CD8-positive, alpha-beta T cell (primary cell): ENCODE measurements at regions of chr4 and their contacts with region 1.

Region 1: DNA sequence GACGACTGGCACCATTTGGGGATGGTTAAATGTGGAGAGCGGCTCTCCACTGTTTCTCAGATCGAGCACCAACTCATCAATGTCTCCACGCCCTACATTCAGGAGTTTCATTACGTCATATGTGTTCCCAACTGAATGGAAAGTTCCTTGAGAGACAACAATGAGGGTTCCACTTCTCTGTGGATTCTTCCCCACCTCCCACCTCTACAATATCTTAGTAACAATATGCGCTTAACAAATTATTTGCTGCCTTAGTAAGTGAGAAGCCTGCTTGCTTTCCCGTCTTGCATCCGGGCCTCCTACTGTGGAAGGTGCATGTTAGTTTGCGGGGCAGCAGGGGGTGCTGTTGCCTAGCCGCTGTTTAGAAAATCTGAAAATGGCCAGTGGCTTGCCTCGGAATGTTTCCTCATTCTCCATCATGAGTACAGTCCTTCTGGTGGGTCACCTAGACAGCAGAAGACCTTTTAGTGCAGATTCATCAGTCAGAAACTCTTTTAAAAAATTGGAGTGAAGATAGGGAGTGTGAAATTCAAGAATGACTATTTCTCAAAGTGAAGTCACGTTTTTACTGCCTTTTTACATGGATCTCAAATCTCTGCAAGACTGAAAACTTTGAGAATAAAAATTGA is 55.7 kb downstream of the PHOX2B start:
- DNase-seq: peak in 4 of 9 experiments; percentile 13 to 32 (median 18)
- ATAC-seq: no peak
- H3K4me3 ChIP-seq: no peak overlapping the region
- H3K4me3 Mint-ChIP-seq: no peak overlapping the region
- H3K27ac ChIP-seq: no peak overlapping the region
- H3K27ac Mint-ChIP-seq: no peak overlapping the region
- H3K4me1 ChIP-seq: no peaks in the 10 kb centered on the region
- H3K4me1 Mint-ChIP-seq: no peaks in the 10 kb centered on the region
- H3K27me3 ChIP-seq: no peaks in the 10 kb centered on the region
- H3K27me3 Mint-ChIP-seq: peaks cover 3% of the 10 kb centered on the region
- CTCF ChIP-seq: no peak

Region 2: DNA sequence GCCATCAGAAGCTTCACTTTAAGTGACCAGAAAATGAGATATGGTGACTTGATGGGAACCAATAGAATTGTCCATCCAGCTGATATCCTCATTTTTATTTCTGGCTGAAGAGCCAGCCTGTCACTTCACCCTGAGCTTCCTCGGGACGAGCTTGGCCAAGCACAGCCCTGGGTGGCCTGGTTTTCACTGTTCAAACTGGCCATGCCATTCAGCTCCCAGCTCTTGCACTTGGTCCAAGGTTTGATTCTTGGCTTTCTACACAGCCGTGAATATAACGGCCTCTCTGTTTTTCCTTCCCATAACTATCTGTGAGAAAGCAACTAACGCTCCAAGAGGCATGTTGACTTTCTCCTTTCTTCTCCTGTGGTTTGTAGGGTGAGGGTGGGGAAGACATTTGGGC is 83.0 kb before region 1 on chr4:
- CTCF ChIA-PET with region 1: no interaction called
- POLR2A ChIA-PET with region 1: no interaction called
- intact Hi-C with region 1: no loop called
- DNase-seq: no peak
- ATAC-seq: no peak
- H3K4me3 ChIP-seq: no peak overlapping the region
- H3K4me3 Mint-ChIP-seq: no peak overlapping the region
- H3K27ac ChIP-seq: no peak overlapping the region
- H3K27ac Mint-ChIP-seq: no peak overlapping the region
- H3K4me1 ChIP-seq: no peaks in the 10 kb centered on the region
- H3K4me1 Mint-ChIP-seq: no peaks in the 10 kb centered on the region
- H3K27me3 ChIP-seq: no peaks in the 10 kb centered on the region
- H3K27me3 Mint-ChIP-seq: peaks cover 4% of the 10 kb centered on the region
- CTCF ChIP-seq: no peak

Region 3: GRCh38 chr4:41882625-41883347 is 190.0 kb after region 1 on chr4:
- CTCF ChIA-PET with region 1: no interaction called
- POLR2A ChIA-PET with region 1: no interaction called
- intact Hi-C with region 1: loop called (anchors 2 to 5 kb)
- DNase-seq: peak; percentile 24 to 71 (median 49)
- ATAC-seq: peak; percentile 93
- H3K4me3 ChIP-seq: peak overlapping the region; percentile 38 to 52
- H3K4me3 Mint-ChIP-seq: peak overlapping the region; percentile 78
- H3K27ac ChIP-seq: no peak overlapping the region
- H3K27ac Mint-ChIP-seq: no peak overlapping the region
- H3K4me1 ChIP-seq: peaks cover 21% of the 10 kb centered on the region
- H3K4me1 Mint-ChIP-seq: peaks cover 26% of the 10 kb centered on the region
- H3K27me3 ChIP-seq: peaks cover 27% of the 10 kb centered on the region in 2 experiments
- H3K27me3 Mint-ChIP-seq: peaks cover 63% of the 10 kb centered on the region
- CTCF ChIP-seq: peak; percentile 99

Region 4: DNA sequence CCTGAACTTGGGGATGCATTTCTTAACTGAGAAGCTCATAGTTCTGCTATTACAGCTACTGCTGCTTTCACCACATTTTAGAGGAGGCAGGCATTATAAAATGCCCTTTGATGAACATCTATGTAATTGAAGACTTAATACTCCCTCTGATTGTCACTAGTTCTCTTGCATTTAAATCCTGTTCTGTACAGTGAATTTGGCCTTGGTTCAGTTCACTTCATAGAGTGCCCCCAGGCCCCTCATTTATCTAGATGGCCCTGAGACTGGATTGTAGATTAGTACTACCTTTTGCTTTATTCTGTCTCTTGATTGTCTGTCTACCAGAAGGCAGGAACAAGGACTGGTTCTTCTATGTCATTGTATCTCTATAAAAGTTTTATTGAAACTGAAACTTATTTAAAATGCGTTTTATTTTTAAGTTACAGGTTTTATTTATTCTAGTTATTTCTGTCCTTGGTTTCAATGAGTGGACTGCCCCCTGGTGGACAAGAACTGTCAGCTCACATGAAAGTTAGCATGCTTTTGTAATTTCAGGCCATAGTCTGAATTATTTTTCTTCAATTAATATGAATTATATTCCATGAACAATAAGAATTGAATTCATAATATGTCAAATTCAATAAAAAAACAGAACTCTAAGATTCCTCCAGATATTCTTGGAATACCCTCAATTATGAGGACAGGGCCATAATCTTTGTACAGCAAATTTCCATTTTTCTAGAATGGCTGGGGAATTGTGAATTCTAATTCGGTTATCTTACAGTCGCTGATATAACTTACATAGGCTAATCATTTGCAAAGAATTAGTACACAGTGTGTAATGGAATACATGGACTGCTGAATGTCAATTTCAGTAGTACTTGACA is 195.2 kb after region 1 on chr4:
- CTCF ChIA-PET with region 1: no interaction called
- POLR2A ChIA-PET with region 1: no interaction called
- intact Hi-C with region 1: loop called (anchors 2 to 5 kb)
- DNase-seq: peak in 7 of 9 experiments; percentile 17 to 63 (median 47)
- ATAC-seq: no peak
- H3K4me3 ChIP-seq: no peak overlapping the region
- H3K4me3 Mint-ChIP-seq: no peak overlapping the region
- H3K27ac ChIP-seq: no peak overlapping the region
- H3K27ac Mint-ChIP-seq: no peak overlapping the region
- H3K4me1 ChIP-seq: no peaks in the 10 kb centered on the region
- H3K4me1 Mint-ChIP-seq: no peaks in the 10 kb centered on the region
- H3K27me3 ChIP-seq: no peaks in the 10 kb centered on the region
- H3K27me3 Mint-ChIP-seq: peaks cover 28% of the 10 kb centered on the region
- CTCF ChIP-seq: peak; percentile 99